ENCODE measurements at regions of chr4 and their contacts with region 1.

Region 1: GRCh38 chr4:144787365-144788258 is 141.7 kb downstream of the HHIP start:
- DNase-seq: peak; percentile 12
- ATAC-seq: no peak
- H3K4me3 ChIP-seq: no peak overlapping the region
- H3K27ac ChIP-seq: no peak overlapping the region
- H3K4me1 ChIP-seq: no peaks in the 10 kb centered on the region
- H3K27me3 ChIP-seq: no peaks in the 10 kb centered on the region
- CTCF ChIP-seq: peak; percentile 31; the same call in 1 of the 2 replicates

Region 2: DNA sequence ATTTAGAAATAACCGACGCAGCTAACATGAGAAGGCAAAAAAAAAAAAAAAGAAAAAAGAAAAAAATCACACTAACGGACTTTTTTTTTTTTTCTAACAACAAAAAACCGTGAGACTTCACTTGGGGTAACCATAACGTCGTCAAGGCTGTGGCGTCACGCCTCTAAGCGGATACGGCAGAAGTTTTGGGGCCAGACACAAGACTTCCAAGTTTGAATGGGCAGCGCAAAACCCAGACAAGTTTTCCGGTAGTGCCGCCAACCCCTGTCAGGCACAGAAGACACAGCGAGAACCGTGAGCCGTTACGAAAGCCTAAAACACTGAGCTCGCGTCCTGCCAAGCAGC is 1274.7 kb before region 1 on chr4:
- CTCF ChIA-PET with region 1: no interaction called
- POLR2A ChIA-PET with region 1: interaction called, 10 read pairs
- in situ Hi-C with region 1: no loop called
- intact Hi-C with region 1: no loop called
- DNase-seq: no peak
- ATAC-seq: peak; percentile 66
- H3K4me3 ChIP-seq: peak overlapping the region; percentile 91 to 93
- H3K27ac ChIP-seq: peak overlapping the region; percentile 80
- H3K4me1 ChIP-seq: peaks cover 16% of the 10 kb centered on the region
- H3K27me3 ChIP-seq: no peaks in the 10 kb centered on the region
- CTCF ChIP-seq: no peak